Calu3 (cell line): ENCODE measurements at regions of chrX and their contacts with region 1.

Region 1: DNA sequence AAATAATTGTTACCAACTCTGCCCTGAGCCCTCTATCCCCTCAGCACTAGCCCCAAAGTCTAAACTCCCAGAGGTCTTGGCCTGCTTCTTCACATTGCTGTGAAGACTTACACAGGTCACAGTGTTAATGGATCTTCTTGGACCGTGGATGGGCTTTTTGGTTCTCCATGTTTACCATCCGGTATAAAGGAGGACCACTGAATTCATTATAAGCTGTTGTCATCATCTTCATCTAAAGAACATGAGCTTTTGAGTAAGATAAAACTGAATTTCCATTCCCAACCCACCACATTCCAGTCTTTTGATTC is 8.5 kb downstream of the NUDT11 start:
- DNase-seq: no peak
- H3K4me3 Mint-ChIP-seq: no peak overlapping the region
- H3K27ac Mint-ChIP-seq: no peak overlapping the region
- H3K4me1 Mint-ChIP-seq: no peaks in the 10 kb centered on the region
- H3K27me3 Mint-ChIP-seq: peaks cover 19% of the 10 kb centered on the region
- CTCF ChIP-seq: no peak

Region 2: GRCh38 chrX:51520393-51520792 is 32.5 kb after region 1 on chrX:
- CTCF ChIA-PET with region 1: no interaction called
- intact Hi-C with region 1: no loop called
- DNase-seq: no peak
- H3K4me3 Mint-ChIP-seq: no peak overlapping the region
- H3K27ac Mint-ChIP-seq: no peak overlapping the region
- H3K4me1 Mint-ChIP-seq: no peaks in the 10 kb centered on the region
- H3K27me3 Mint-ChIP-seq: peaks cover 5% of the 10 kb centered on the region
- CTCF ChIP-seq: no peak

Region 3: DNA sequence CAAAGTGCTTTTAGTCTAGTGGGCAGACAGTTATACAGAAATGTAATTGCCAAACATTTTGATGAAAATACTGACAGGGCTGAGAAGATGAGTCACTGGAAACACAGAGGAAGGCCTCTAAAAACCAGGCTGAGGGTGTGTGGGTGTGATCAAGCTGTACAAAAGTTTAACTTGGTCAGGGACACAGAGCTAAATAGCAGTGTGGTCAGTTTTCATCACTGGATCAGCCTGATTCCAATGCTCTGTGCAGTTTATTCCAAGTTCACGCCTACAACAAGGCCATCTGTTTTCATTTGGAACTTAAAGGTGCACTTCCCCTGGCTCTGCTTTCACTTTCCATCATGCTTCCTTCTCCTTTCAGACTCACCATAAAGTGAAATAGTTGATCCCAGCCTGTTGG is 120.2 kb after region 1 on chrX:
- CTCF ChIA-PET with region 1: no interaction called
- intact Hi-C with region 1: loop called (anchors 5 kb)
- DNase-seq: no peak
- H3K4me3 Mint-ChIP-seq: no peak overlapping the region
- H3K27ac Mint-ChIP-seq: no peak overlapping the region
- H3K4me1 Mint-ChIP-seq: no peaks in the 10 kb centered on the region
- H3K27me3 Mint-ChIP-seq: peaks cover 32% of the 10 kb centered on the region
- CTCF ChIP-seq: no peak